ENCODE measurements at regions of chr12 and their contacts with region 1.

Region 1: DNA sequence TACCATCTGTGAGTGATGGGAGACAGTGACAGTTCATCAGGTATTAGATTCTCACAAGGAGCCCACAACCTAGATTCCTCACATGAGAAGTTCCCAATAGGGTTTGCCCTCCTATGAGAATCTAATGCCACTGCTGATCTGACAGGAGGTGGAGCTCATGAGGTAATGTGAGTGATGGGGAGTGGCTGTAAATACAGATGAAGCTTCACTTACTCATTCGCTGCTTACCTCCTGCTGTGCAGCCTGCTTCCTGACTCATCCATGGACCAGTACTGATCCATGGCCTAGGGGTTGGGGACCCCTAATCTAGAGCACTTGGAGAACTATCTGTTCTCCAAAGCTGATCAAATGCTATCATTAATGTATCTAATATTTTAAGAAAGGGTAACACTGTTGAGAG is 17.7 kb downstream of the CLEC2D start:
- DNase-seq: peak in 2 of 9 experiments; percentile 50 to 68
- ATAC-seq: peak; percentile 61
- H3K4me3 ChIP-seq: no peak overlapping the region
- H3K4me3 Mint-ChIP-seq: no peak overlapping the region
- H3K27ac ChIP-seq: peak overlapping the region in 1 of 2 experiments; percentile 50
- H3K27ac Mint-ChIP-seq: peak overlapping the region; percentile 67
- H3K4me1 ChIP-seq: peaks cover 41% of the 10 kb centered on the region
- H3K4me1 Mint-ChIP-seq: peaks cover 76% of the 10 kb centered on the region
- H3K27me3 ChIP-seq: no peaks in the 10 kb centered on the region
- H3K27me3 Mint-ChIP-seq: no peaks in the 10 kb centered on the region
- CTCF ChIP-seq: no peak

Region 2: GRCh38 chr12:9662500-9662899 is 24.7 kb before region 1 on chr12:
- CTCF ChIA-PET with region 1: interaction called, 5 read pairs
- POLR2A ChIA-PET with region 1: interaction called, 13 read pairs
- intact Hi-C with region 1: no loop called
- DNase-seq: peak in 1 of 9 experiments; percentile 38
- ATAC-seq: peak; percentile 44
- H3K4me3 ChIP-seq: no peak overlapping the region
- H3K4me3 Mint-ChIP-seq: peak overlapping the region; percentile 53
- H3K27ac ChIP-seq: peak overlapping the region in 1 of 2 experiments; percentile 52
- H3K27ac Mint-ChIP-seq: peak overlapping the region; percentile 88
- H3K4me1 ChIP-seq: peaks cover 83% of the 10 kb centered on the region
- H3K4me1 Mint-ChIP-seq: peaks cover 91% of the 10 kb centered on the region
- H3K27me3 ChIP-seq: no peaks in the 10 kb centered on the region
- H3K27me3 Mint-ChIP-seq: no peaks in the 10 kb centered on the region
- CTCF ChIP-seq: no peak

Region 3: GRCh38 chr12:9673404-9674225 is 13.6 kb before region 1 on chr12:
- CTCF ChIA-PET with region 1: interaction called, 5 read pairs
- POLR2A ChIA-PET with region 1: interaction called, 14 read pairs
- intact Hi-C with region 1: loop called in 1 of 2 experiments (anchors 1 kb)
- DNase-seq: peak in 7 of 9 experiments; percentile 44 to 82 (median 63)
- ATAC-seq: peak; percentile 37
- H3K4me3 ChIP-seq: peak overlapping the region; percentile 50 to 68
- H3K4me3 Mint-ChIP-seq: peak overlapping the region; percentile 88
- H3K27ac ChIP-seq: peak overlapping the region; percentile 42 to 74
- H3K27ac Mint-ChIP-seq: peak overlapping the region; percentile 95
- H3K4me1 ChIP-seq: peaks cover 44% of the 10 kb centered on the region
- H3K4me1 Mint-ChIP-seq: peaks cover 76% of the 10 kb centered on the region
- H3K27me3 ChIP-seq: no peaks in the 10 kb centered on the region
- H3K27me3 Mint-ChIP-seq: no peaks in the 10 kb centered on the region
- CTCF ChIP-seq: no peak

Region 4: DNA sequence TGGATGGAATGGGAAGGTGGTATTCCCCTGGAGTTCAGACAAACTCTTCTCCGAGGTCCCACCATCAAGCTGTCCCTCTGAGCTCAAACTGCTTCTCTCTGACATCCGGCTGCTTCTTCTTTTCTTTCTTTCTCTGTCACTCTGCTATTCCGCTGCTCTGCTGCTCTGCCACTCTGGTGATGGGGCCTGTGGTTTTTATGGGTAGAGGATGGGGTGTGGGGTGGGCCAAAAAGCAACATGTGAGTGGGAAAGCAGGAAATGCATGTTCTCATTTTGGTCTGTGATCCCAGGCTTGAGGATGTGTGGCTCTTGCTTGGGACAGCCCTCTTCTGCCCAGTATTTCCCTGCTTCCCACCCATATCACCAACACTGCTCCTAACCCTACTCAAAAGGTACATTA is 15.0 kb after region 1 on chr12:
- CTCF ChIA-PET with region 1: interaction called, 8 read pairs
- POLR2A ChIA-PET with region 1: interaction called, 10 read pairs
- intact Hi-C with region 1: loop called (anchors 1 to 2 kb)
- DNase-seq: peak in 8 of 9 experiments; percentile 41 to 82 (median 58)
- ATAC-seq: peak; percentile 72
- H3K4me3 ChIP-seq: peak overlapping the region; percentile 20 to 22
- H3K4me3 Mint-ChIP-seq: peak overlapping the region; percentile 56
- H3K27ac ChIP-seq: peak overlapping the region; percentile 47 to 78
- H3K27ac Mint-ChIP-seq: peak overlapping the region; percentile 94
- H3K4me1 ChIP-seq: peaks cover 46% of the 10 kb centered on the region
- H3K4me1 Mint-ChIP-seq: peaks cover 79% of the 10 kb centered on the region
- H3K27me3 ChIP-seq: no peaks in the 10 kb centered on the region
- H3K27me3 Mint-ChIP-seq: no peaks in the 10 kb centered on the region
- CTCF ChIP-seq: no peak